Heart left ventricle (tissue), 16 donors: ENCODE measurements at regions of chr18 and their contacts with region 1.

Region 1: DNA sequence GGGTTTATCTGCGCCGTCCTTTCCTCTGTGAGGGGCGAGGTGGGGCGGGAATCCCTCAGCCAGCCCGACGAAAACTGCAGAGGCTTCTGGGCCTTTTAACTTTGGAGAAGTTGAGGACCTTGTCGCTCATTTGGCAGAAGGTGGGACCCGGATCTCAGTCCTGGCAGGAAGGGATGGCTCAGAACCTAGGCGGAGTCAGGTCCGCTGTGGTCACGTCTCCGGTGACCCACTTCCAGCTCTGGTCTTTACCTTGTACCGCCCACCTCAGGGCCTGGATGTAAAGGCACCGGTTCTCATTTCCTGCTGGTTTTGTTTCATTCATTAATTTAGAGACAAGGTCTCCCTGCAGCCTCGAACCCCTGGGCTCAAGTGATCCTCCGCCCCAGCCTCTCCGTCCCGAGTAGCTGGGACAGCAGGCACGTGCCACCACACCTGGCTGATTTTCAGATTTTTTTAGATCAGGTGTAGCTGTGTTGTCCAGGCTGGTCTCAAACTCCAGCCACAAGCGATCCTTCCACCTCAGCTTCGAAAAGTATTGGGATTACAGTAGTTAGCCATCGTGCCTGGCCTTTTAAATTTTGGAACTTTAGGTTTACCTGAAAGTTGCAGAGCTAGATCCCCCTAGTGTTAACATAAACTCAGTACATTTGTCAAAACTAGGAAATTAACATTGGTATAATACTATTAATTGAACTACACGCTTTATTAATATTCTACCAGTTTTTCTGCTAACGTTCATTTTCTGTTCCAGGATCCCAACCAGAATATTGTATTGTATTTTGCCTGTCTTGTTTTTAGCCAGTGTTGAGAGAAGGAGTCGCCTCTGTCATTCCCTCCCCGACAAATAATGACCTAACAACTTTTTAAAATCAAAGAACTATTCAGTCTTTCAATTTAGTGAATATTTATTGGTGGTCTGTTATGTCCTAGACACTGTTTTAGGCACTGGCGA is 852 bp downstream of the POLI start:
- DNase-seq: peak in 2 of 5 donors; percentile 55 to 68
- ATAC-seq: peak; percentile 17 to 61 (median 55)
- H3K4me3 ChIP-seq: peak overlapping the region; percentile 60 to 94 (median 86)
- H3K27ac ChIP-seq: peak overlapping the region; percentile 80 to 95 (median 94)
- H3K4me1 ChIP-seq: peaks cover 0 to 23% (median 11%) of the 10 kb centered on the region in 12 donors
- H3K27me3 ChIP-seq: no peaks in the 10 kb centered on the region
- CTCF ChIP-seq: peak in 11 of 12 donors; percentile 33 to 63 (median 39)
- POLR2A ChIP-seq: no peak

Region 2: DNA sequence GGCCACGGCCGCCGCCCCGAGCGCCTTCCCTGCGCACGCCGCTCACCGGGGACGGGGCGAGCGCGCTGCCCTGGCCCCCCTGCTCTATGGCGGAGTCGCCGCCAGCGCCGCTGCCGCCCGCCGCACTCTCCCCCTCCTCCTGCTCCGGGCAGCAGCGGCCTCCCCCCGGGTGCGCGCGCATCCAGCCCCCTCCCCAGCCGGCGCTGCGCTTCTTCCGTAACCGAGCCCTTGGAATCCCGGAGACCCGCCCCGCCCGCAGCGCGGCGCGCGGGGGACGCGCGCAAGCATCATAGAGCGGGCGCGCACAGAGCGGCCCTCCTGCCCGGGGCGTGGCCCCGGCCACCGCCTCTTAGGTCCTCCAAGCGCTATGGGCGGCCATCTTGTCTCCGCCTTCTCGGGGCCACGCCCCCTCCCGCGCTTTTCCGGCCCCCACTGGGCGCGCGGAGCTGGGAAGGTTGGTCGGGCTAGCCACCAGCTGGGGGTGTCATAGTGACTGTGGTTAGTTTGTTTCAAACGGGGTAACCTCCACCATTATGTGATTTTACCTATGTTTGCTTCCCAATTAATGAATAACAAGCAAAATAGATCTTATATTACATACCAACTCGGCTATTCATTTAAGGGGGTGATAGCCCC is 45.7 kb before region 1 on chr18 and contains the start of gene MBD2:
- intact Hi-C with region 1: loop called in 9 of 10 experiments (anchors 1 to 5 kb)
- DNase-seq: peak; percentile 94 to 97 (median 96)
- ATAC-seq: peak; percentile 100
- H3K4me3 ChIP-seq: peak within 1 kb of the TSS; percentile 50 to 92 (median 77)
- H3K27ac ChIP-seq: peak within 1 kb of the TSS in 11 of 12 donors; percentile 59 to 86 (median 73)
- H3K4me1 ChIP-seq: peaks cover 0 to 45% (median 27%) of the 10 kb centered on the region in 12 donors
- H3K27me3 ChIP-seq: no peaks in the 10 kb centered on the region
- CTCF ChIP-seq: peak in 10 of 12 donors; percentile 9 to 64 (median 31)
- POLR2A ChIP-seq: peak in 1 of 2 donors; percentile 74
- total RNA-seq, gene MBD2: 15.9 to 74.9 (median 48.2) TPM

Region 3: DNA sequence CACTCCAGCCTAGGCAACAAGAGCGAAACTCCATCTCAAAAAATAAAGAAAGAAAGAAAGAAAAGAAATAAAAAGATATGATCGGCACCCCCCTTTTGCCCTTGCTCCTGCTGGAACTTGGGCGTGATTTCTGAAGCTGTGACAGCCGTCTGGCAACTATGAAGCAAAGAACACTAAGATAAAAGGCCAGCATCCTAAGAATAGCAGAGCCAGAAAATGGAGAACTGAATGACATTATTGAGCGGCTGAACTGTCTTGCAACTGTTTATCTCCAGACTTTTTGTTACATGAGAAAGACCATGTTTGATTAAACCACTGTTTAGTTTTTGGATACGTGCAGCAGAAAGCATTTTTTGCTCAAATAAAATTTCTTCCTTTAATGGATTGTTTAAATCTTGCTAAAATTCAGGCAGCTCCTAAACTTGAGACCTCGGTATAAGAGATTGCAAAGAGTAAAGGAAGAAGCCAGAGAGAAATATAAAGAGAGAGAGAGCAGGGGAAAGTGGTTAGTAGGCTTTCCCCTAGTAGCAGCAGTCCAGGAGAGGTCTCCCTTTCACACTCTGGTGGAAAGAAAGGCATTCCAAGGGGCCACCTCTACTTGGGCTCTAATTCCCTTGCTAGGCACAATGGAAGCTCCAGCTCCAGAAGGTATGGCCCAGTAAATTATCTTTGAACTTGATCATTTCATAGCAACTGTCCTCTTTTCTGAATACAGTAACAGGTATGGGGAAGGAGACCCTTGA is 37.5 kb before region 1 on chr18:
- intact Hi-C with region 1: loop called in 3 of 10 experiments (anchors 5 kb)
- DNase-seq: no peak
- ATAC-seq: peak; percentile 64 to 87 (median 73)
- H3K4me3 ChIP-seq: no peak overlapping the region
- H3K27ac ChIP-seq: peak overlapping the region in 9 of 12 donors; percentile 1 to 61 (median 51)
- H3K4me1 ChIP-seq: peaks cover 0 to 5% (median 0%) of the 10 kb centered on the region in 12 donors
- H3K27me3 ChIP-seq: no peaks in the 10 kb centered on the region
- CTCF ChIP-seq: no peak
- POLR2A ChIP-seq: no peak

Region 4: DNA sequence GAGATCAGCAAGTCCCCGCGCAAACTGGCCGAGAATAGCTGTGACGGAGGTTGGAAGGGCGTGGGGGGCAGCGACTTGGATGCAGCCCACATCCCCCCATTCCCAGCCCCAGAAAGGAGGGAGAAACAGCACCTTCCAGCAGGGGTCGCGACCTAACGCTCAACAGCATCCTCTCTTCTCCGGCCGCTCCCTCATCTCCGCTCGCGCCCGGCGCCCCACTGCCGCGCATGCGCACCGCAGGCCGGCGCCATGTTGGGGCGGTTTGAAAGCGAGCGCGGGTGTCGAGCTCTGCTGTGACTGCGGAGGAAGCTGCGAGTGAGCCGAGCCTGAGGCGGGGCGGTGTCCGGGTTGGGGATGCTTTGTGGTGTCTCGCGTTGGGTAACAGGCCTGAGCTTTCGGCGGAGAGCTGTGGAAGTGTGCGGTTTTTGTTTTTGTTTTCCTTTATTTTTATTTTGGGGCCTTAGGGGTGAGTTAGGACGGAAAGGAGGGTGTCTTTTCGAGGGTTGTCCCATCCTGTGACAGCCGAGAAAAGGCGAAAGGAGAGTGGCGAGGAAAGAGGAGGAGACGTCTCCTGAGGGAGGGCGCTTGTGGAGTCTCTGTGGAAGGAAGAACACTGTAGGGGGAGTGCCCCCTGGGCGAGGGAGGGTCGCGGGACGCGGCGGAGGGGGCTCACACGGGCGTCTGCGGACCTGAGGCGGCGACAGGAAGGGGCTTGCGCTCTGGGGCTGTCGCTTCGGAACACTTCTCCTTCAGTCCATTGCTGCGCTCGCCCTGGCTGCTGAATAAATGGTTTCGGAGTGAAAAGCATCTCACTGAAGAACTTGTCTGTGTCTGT is 87.7 kb after region 1 on chr18 and contains the starts of genes C18orf54 and STARD6:
- intact Hi-C with region 1: loop called in 1 of 10 experiments (anchors 5 kb)
- DNase-seq: peak; percentile 84 to 94 (median 88)
- ATAC-seq: peak; percentile 95 to 99 (median 99)
- H3K4me3 ChIP-seq: peak within 1 kb of the TSS; percentile 43 to 88 (median 76)
- H3K27ac ChIP-seq: peak within 1 kb of the TSS in 11 of 12 donors; percentile 13 to 73 (median 56)
- H3K4me1 ChIP-seq: peaks cover 0 to 15% (median 7%) of the 10 kb centered on the region in 12 donors
- H3K27me3 ChIP-seq: no peaks in the 10 kb centered on the region
- CTCF ChIP-seq: peak in 11 of 12 donors; percentile 11 to 62 (median 41)
- POLR2A ChIP-seq: peak in 1 of 2 donors; percentile 48
- total RNA-seq, gene C18orf54: 0.46 to 2.4 (median 1.1) TPM
- total RNA-seq, gene STARD6: not detected

Region 5: DNA sequence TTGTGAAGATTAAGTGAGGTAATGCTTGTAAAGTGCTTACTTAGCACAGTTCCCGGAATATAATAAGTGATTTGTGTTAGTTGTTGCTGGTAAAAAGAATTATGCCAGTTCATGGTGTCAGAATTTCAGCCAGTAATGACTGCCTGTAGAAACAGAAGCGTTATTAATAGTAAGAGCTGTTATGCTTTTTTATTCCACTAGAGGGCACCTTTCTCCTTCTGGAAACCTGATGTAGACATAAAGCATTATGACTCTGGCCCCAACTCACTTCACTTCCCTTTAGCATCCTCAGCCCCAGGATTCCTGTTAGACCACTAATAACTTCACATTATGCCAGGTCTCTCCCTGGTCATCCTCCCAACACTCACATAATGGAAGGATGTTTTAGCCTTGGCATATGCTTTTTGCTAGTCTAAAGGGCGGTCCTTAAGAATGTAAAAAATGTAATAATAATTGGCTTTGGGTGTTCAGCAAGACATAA is 122.4 kb after region 1 on chr18:
- intact Hi-C with region 1: no loop called
- DNase-seq: no peak
- ATAC-seq: peak in 3 of 4 donors; percentile 45 to 51 (median 48)
- H3K4me3 ChIP-seq: no peak overlapping the region
- H3K27ac ChIP-seq: no peak overlapping the region
- H3K4me1 ChIP-seq: peaks cover 0 to 10% (median 0%) of the 10 kb centered on the region in 12 donors
- H3K27me3 ChIP-seq: no peaks in the 10 kb centered on the region
- CTCF ChIP-seq: peak; percentile 57 to 85 (median 71)
- POLR2A ChIP-seq: no peak